B cell (primary cell): ENCODE measurements at regions of chr15 and their contacts with region 1.

Region 1: GRCh38 chr15:89874926-89875564 is 18.7 kb downstream of the AP3S2 start:
- DNase-seq: peak; percentile 81
- ATAC-seq: peak; percentile 99
- H3K4me3 ChIP-seq: no peak overlapping the region
- H3K4me3 Mint-ChIP-seq: no peak overlapping the region
- H3K27ac ChIP-seq: no peak overlapping the region
- H3K27ac Mint-ChIP-seq: no peak overlapping the region
- H3K4me1 ChIP-seq: peaks cover 0 to 4% of the 10 kb centered on the region in 2 donors
- H3K4me1 Mint-ChIP-seq: peaks cover 5% of the 10 kb centered on the region
- H3K27me3 ChIP-seq: no peaks in the 10 kb centered on the region
- H3K27me3 Mint-ChIP-seq: no peaks in the 10 kb centered on the region
- CTCF ChIP-seq: peak; percentile 97

Region 2: DNA sequence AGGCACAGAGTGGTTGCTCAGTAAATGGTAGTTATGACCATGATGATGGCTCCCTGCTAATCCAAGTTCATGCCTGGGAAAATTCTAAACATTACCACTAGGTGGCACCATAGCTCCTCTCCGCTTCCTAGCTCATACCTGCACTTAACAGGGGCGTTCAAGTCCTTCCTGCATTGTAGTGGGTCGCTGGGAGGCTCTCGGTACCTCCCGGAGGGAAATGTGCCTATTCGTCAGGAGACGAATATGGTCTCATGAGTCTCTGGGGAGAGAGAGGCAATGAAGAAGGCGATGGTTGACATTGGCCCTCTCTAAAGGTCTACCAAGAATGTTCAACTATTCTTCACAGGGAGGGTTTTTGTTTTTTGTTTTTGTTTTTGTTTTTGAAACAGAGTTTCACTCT is 134.9 kb before region 1 on chr15:
- CTCF ChIA-PET with region 1: interaction called, 93 read pairs
- POLR2A ChIA-PET with region 1: no interaction called
- intact Hi-C with region 1: loop called (anchors 1 kb)
- DNase-seq: peak; percentile 82
- ATAC-seq: peak; percentile 87
- H3K4me3 ChIP-seq: no peak overlapping the region
- H3K4me3 Mint-ChIP-seq: peak overlapping the region; percentile 41
- H3K27ac ChIP-seq: no peak overlapping the region
- H3K27ac Mint-ChIP-seq: no peak overlapping the region
- H3K4me1 ChIP-seq: peaks cover 0 to 2% of the 10 kb centered on the region in 2 donors
- H3K4me1 Mint-ChIP-seq: peaks cover 3% of the 10 kb centered on the region
- H3K27me3 ChIP-seq: peaks cover 0 to 4% (median 0%) of the 10 kb centered on the region in 4 experiments
- H3K27me3 Mint-ChIP-seq: peaks cover 25% of the 10 kb centered on the region
- CTCF ChIP-seq: peak; percentile 96

Region 3: DNA sequence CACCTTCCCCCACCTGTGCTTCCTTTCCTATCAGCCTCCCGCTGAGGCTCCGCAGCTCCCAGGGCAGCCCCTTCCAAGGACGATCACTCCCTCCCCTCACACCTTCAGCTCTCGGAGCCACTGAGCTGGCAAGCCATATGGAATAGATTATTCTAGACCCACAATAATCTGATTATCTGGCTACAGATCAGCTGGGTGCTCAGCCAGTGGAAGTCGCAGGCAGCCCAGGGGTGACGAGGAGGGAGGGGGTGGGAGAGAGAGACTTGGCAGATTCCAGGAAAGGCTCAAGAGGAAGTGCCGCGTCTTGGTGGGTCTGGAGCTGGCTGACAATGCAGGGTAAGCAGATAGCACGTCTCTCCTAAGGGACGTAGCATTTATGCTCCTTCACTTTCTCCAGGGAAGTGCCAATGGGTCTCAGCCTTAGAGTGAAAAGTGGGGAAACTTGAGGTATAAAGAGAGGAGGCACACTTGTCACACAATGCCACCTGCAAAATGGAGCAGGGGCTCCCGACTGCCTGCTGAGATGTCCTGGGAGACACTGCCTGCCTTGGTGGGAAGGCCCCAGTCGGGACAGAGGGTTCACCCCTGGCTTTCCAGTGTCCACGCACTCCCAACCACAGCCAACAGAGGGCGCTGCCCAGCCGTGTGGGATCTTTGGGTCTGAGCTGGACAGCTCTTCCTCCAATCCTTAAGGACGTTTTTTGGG is 114.6 kb before region 1 on chr15:
- CTCF ChIA-PET with region 1: interaction called, 159 read pairs
- POLR2A ChIA-PET with region 1: no interaction called
- intact Hi-C with region 1: loop called (anchors 1 kb)
- DNase-seq: peak; percentile 75
- ATAC-seq: peak; percentile 81
- H3K4me3 ChIP-seq: no peak overlapping the region
- H3K4me3 Mint-ChIP-seq: no peak overlapping the region
- H3K27ac ChIP-seq: no peak overlapping the region
- H3K27ac Mint-ChIP-seq: no peak overlapping the region
- H3K4me1 ChIP-seq: peaks cover 0 to 8% of the 10 kb centered on the region in 2 donors
- H3K4me1 Mint-ChIP-seq: no peaks in the 10 kb centered on the region
- H3K27me3 ChIP-seq: no peaks in the 10 kb centered on the region
- H3K27me3 Mint-ChIP-seq: peaks cover 7% of the 10 kb centered on the region
- CTCF ChIP-seq: peak; percentile 86

Region 4: DNA sequence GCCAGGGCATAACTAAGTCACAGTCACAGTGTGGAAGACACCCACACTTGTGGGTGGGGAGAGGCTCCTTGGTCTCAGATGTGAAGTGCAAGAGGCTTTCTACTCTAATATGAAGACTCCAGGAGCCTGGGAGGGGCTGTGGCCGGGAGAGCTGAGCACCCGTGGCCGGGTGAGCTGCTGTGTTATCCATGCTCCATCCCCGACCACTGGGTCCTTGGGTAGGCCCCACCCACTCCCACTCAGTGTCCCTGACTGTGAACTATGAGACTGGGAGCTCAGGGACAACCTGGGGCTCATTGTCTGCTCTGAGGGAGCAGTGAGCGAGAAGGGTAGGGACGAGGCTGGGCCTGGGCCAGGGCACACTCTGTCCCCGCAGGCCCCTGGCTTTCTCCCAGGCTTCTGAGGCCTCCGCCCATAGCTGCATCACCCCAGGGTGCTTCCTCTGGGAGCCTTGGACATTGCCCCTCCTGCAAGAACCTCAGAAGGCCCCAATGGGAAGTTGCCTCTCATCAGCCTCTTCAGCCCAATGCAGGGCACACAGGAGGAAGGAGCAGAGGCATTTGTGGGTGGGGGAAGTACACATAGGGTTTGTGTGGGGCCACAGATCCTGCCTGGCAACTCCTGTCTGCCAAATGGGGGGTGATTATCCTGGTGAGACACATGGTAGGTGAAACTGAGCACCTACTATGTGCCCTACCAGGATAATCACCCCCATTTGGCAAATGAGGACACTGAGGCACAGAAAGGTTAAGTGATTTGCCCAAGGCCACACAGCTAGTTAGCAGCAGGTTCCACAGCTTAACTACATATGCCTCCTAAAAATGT is 62.8 kb before region 1 on chr15:
- CTCF ChIA-PET with region 1: no interaction called
- POLR2A ChIA-PET with region 1: no interaction called
- intact Hi-C with region 1: no loop called
- DNase-seq: no peak
- ATAC-seq: no peak
- H3K4me3 ChIP-seq: no peak overlapping the region
- H3K4me3 Mint-ChIP-seq: no peak overlapping the region
- H3K27ac ChIP-seq: no peak overlapping the region
- H3K27ac Mint-ChIP-seq: no peak overlapping the region
- H3K4me1 ChIP-seq: peaks cover 14 to 17% of the 10 kb centered on the region in 2 donors
- H3K4me1 Mint-ChIP-seq: peaks cover 9% of the 10 kb centered on the region
- H3K27me3 ChIP-seq: peaks cover 0 to 51% (median 27%) of the 10 kb centered on the region in 4 experiments
- H3K27me3 Mint-ChIP-seq: peaks cover 29% of the 10 kb centered on the region
- CTCF ChIP-seq: no peak

Region 5: GRCh38 chr15:89863918-89864317 is 11.1 kb before region 1 on chr15:
- CTCF ChIA-PET with region 1: interaction called, 17 read pairs
- POLR2A ChIA-PET with region 1: no interaction called
- intact Hi-C with region 1: no loop called
- DNase-seq: no peak
- ATAC-seq: no peak
- H3K4me3 ChIP-seq: no peak overlapping the region
- H3K4me3 Mint-ChIP-seq: no peak overlapping the region
- H3K27ac ChIP-seq: no peak overlapping the region
- H3K27ac Mint-ChIP-seq: no peak overlapping the region
- H3K4me1 ChIP-seq: peaks cover 6% of the 10 kb centered on the region in 2 donors
- H3K4me1 Mint-ChIP-seq: peaks cover 8% of the 10 kb centered on the region
- H3K27me3 ChIP-seq: no peaks in the 10 kb centered on the region
- H3K27me3 Mint-ChIP-seq: no peaks in the 10 kb centered on the region
- CTCF ChIP-seq: no peak

Region 6: GRCh38 chr15:89893696-89894455 is 18.8 kb after region 1 on chr15 and contains the start of gene AP3S2:
- CTCF ChIA-PET with region 1: interaction called, 54 read pairs
- POLR2A ChIA-PET with region 1: no interaction called
- intact Hi-C with region 1: loop called (anchors 1 kb)
- DNase-seq: peak; percentile 93
- ATAC-seq: peak; percentile 91
- H3K4me3 ChIP-seq: peak within 1 kb of the TSS; percentile 75 to 95 (median 89)
- H3K4me3 Mint-ChIP-seq: peak within 1 kb of the TSS; percentile 98
- H3K27ac ChIP-seq: peak within 1 kb of the TSS; percentile 62 to 80
- H3K27ac Mint-ChIP-seq: peak within 1 kb of the TSS; percentile 95
- H3K4me1 ChIP-seq: peaks cover 7 to 14% of the 10 kb centered on the region in 2 donors
- H3K4me1 Mint-ChIP-seq: peaks cover 33% of the 10 kb centered on the region
- H3K27me3 ChIP-seq: no peaks in the 10 kb centered on the region
- H3K27me3 Mint-ChIP-seq: no peaks in the 10 kb centered on the region
- CTCF ChIP-seq: no peak
- total RNA-seq, gene AP3S2: 32.3 and 43.1 TPM in 2 replicates